Sigmoid colon (tissue), 7 donors: ENCODE measurements at regions of chr16 and their contacts with region 1.

Region 1: GRCh38 chr16:31073968-31074813 is at the starts of genes ZNF646 and ZNF668:
- DNase-seq: peak; percentile 99
- H3K4me3 ChIP-seq: peak within 1 kb of the TSS; percentile 91 to 99 (median 97)
- H3K27ac ChIP-seq: peak within 1 kb of the TSS; percentile 93 to 97 (median 96)
- H3K4me1 ChIP-seq: peaks cover 0 to 31% (median 27%) of the 10 kb centered on the region in 4 donors
- H3K27me3 ChIP-seq: no peaks in the 10 kb centered on the region
- CTCF ChIP-seq: no peak
- EP300 ChIP-seq: peak in 1 of 4 donors; percentile 30
- POLR2A ChIP-seq: peak; percentile 45 to 57
- total RNA-seq, gene ZNF646: 8.3 to 12.2 (median 8.8) TPM
- total RNA-seq, gene ZNF668: 5.2 to 12.5 (median 7.7) TPM

Region 2: DNA sequence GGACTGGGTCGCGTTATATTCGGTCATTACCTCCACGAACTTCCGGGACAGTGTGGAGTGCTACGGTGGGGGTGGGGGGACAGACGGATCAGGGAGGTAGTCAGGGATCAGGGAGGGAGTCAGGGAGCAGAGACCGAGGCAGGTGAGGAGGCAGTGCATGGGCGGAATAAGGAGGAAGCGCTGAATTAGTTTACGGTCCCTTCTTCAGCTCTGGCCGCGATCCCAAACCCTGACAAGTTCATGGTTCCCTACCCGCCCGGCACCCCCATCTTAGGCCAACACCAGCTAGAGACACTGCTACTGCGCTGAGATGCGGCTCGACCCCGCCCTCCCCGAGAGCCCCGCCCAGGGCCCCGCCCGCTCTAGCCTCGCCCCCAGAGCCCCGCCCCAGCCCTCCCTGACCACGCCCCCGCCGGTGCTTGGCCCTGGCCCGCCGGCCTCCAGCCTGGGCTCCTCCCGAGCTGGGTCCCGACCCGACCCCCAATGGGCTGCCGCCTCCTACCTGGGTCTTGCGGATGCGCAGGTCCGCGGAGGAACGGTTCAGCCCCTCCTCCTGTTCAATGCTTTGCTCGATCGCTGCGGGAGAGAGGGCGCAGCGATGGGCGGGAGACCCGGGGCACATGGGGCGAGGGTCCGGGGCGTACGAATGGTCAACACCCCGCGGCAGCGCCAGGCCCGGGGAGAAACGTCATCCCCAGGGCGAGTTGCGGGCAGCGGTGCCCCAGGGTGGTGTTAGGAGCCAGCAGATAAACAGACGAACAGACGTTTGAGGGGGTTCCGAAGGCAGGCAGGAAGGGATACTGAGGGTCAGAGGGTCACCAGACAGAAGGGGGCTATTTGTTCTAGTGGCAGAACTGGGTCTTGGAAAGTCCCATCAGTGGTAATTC is 76.9 kb before region 1 on chr16:
- intact Hi-C with region 1: loop called (anchors 2 kb)
- DNase-seq: peak; percentile 95
- H3K4me3 ChIP-seq: peak overlapping the region; percentile 49 to 66 (median 59)
- H3K27ac ChIP-seq: peak overlapping the region; percentile 81 to 87 (median 87)
- H3K4me1 ChIP-seq: peaks cover 0 to 19% (median 13%) of the 10 kb centered on the region in 4 donors
- H3K27me3 ChIP-seq: no peaks in the 10 kb centered on the region
- CTCF ChIP-seq: no peak
- EP300 ChIP-seq: no peak
- POLR2A ChIP-seq: peak in 1 of 2 donors; percentile 33

Region 3: GRCh38 chr16:31032736-31033708 is 41.2 kb before region 1 on chr16 and contains the start of gene STX4:
- intact Hi-C with region 1: loop called (anchors 1 kb)
- DNase-seq: peak; percentile 99
- H3K4me3 ChIP-seq: peak within 1 kb of the TSS; percentile 79 to 98 (median 96)
- H3K27ac ChIP-seq: peak within 1 kb of the TSS; percentile 87 to 98 (median 94)
- H3K4me1 ChIP-seq: peaks cover 0 to 29% (median 18%) of the 10 kb centered on the region in 4 donors
- H3K27me3 ChIP-seq: no peaks in the 10 kb centered on the region
- CTCF ChIP-seq: no peak
- EP300 ChIP-seq: peak in 2 of 4 donors; percentile 74 to 86
- POLR2A ChIP-seq: peak in 1 of 2 donors; percentile 44
- total RNA-seq, gene STX4: 23.9 to 56.5 (median 37.4) TPM